ENCODE measurements at regions of chr7 and their contacts with region 1.

Region 1: GRCh38 chr7:90403174-90404113 is at the start of gene CLDN12:
- DNase-seq: peak; percentile 90
- ATAC-seq: peak; percentile 96
- H3K4me3 ChIP-seq: peak within 1 kb of the TSS; percentile 65 to 98 (median 81)
- H3K4me3 Mint-ChIP-seq: peak within 1 kb of the TSS; percentile 99
- H3K27ac ChIP-seq: peak within 1 kb of the TSS; percentile 47 to 72
- H3K27ac Mint-ChIP-seq: peak within 1 kb of the TSS; percentile 98
- H3K4me1 ChIP-seq: peaks cover 5% of the 10 kb centered on the region in 2 donors
- H3K4me1 Mint-ChIP-seq: peaks cover 20% of the 10 kb centered on the region
- H3K27me3 ChIP-seq: no peaks in the 10 kb centered on the region
- H3K27me3 Mint-ChIP-seq: no peaks in the 10 kb centered on the region
- CTCF ChIP-seq: no peak
- total RNA-seq, gene CLDN12: 14.1 and 17.3 TPM in 2 replicates

Region 2: DNA sequence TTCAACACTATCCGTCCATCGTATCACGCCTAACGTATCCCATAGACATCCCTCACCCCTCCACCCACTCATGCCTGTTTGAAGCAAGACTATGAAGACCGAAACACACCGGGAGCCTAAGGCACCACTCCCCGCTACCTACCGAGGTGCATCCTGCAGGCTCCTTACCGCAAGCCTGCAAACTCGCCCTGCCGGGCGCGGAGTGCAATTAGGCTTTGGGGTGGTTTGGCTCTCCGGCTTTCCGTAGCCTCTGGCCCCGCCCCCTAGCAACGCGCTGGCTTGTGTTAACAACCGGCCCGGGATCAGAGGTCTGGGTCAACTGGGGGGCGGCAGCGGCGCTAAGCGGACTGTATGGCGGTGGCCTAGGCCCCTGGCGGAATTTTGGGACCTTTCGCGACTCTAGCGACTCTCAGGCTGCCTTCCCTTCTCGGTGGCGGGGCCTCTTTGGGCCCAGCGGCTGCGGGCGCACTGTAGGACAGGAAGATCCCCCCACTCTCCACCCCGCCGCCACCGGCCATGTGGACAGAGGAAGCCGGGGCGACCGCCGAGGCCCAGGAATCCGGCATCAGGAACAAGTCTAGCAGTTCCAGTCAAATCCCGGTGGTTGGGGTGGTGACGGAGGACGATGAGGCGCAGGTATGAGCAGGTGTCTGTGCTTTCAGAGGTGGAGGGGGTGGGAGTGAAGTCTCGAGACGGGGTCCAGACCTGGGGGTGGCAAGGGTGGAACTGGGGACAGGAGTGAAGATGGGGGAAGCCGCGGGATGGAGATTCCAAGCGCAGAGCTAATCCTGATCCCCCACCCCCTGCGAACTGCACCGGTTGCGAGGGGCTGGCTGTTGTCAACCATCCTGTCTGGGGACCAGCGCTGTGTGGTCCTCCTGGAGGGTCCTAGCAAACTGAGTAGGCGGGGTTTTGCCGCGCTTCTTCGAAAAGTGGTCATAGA is 158.3 kb before region 1 on chr7 and contains the start of gene CFAP69:
- CTCF ChIA-PET with region 1: no interaction called
- POLR2A ChIA-PET with region 1: no interaction called
- intact Hi-C with region 1: loop called (anchors 5 kb)
- DNase-seq: peak; percentile 88
- ATAC-seq: peak; percentile 90
- H3K4me3 ChIP-seq: peak within 1 kb of the TSS; percentile 30 to 86 (median 69)
- H3K4me3 Mint-ChIP-seq: peak within 1 kb of the TSS; percentile 91
- H3K27ac ChIP-seq: peak within 1 kb of the TSS in 1 of 2 donors; percentile 37
- H3K27ac Mint-ChIP-seq: peak within 1 kb of the TSS; percentile 2
- H3K4me1 ChIP-seq: peaks cover 16 to 20% of the 10 kb centered on the region in 2 donors
- H3K4me1 Mint-ChIP-seq: peaks cover 28% of the 10 kb centered on the region
- H3K27me3 ChIP-seq: peaks cover 0 to 31% (median 26%) of the 10 kb centered on the region in 4 experiments
- H3K27me3 Mint-ChIP-seq: peaks cover 45% of the 10 kb centered on the region
- CTCF ChIP-seq: no peak
- total RNA-seq, gene CFAP69: 0.15 and 0.29 TPM in 2 replicates

Region 3: DNA sequence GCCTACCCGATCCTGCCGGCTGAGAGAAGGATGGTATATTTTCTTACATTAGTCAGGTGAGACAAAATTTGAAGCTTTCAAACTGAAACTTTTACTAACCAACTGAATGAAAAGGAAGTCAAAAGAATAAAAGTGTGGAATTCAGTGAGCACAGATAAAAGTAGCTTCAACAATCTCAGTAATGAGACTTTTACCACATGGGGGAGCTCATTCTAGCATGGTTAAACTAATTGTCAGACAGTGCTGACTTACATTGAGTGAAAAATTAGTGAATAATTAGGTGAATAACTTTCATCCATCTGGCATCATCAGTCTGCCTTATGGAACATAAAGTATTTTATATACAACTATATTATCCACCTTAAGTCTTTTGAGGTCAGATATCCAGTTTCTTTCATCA is 90.7 kb before region 1 on chr7:
- CTCF ChIA-PET with region 1: no interaction called
- POLR2A ChIA-PET with region 1: no interaction called
- intact Hi-C with region 1: no loop called
- DNase-seq: peak; percentile 14
- ATAC-seq: peak; percentile 43
- H3K4me3 ChIP-seq: no peak overlapping the region
- H3K4me3 Mint-ChIP-seq: no peak overlapping the region
- H3K27ac ChIP-seq: no peak overlapping the region
- H3K27ac Mint-ChIP-seq: no peak overlapping the region
- H3K4me1 ChIP-seq: no peaks in the 10 kb centered on the region
- H3K4me1 Mint-ChIP-seq: no peaks in the 10 kb centered on the region
- H3K27me3 ChIP-seq: no peaks in the 10 kb centered on the region
- H3K27me3 Mint-ChIP-seq: peaks cover 21% of the 10 kb centered on the region
- CTCF ChIP-seq: no peak

Region 4: GRCh38 chr7:90383422-90383821 is 20.0 kb before region 1 on chr7:
- CTCF ChIA-PET with region 1: no interaction called
- POLR2A ChIA-PET with region 1: no interaction called
- intact Hi-C with region 1: no loop called
- DNase-seq: no peak
- ATAC-seq: no peak
- H3K4me3 ChIP-seq: no peak overlapping the region
- H3K4me3 Mint-ChIP-seq: no peak overlapping the region
- H3K27ac ChIP-seq: no peak overlapping the region
- H3K27ac Mint-ChIP-seq: no peak overlapping the region
- H3K4me1 ChIP-seq: no peaks in the 10 kb centered on the region
- H3K4me1 Mint-ChIP-seq: no peaks in the 10 kb centered on the region
- H3K27me3 ChIP-seq: no peaks in the 10 kb centered on the region
- H3K27me3 Mint-ChIP-seq: no peaks in the 10 kb centered on the region
- CTCF ChIP-seq: no peak

Measured in B cell (primary cell).